Calu3 (cell line): ENCODE measurements at regions of chrX and their contacts with region 1.

Region 1: GRCh38 chrX:115330498-115331168 is 41.1 kb downstream of the LUZP4 start:
- DNase-seq: peak; percentile 39
- H3K4me3 Mint-ChIP-seq: no peak overlapping the region
- H3K27ac Mint-ChIP-seq: no peak overlapping the region
- H3K4me1 Mint-ChIP-seq: no peaks in the 10 kb centered on the region
- H3K27me3 Mint-ChIP-seq: no peaks in the 10 kb centered on the region
- CTCF ChIP-seq: peak; percentile 57

Region 2: DNA sequence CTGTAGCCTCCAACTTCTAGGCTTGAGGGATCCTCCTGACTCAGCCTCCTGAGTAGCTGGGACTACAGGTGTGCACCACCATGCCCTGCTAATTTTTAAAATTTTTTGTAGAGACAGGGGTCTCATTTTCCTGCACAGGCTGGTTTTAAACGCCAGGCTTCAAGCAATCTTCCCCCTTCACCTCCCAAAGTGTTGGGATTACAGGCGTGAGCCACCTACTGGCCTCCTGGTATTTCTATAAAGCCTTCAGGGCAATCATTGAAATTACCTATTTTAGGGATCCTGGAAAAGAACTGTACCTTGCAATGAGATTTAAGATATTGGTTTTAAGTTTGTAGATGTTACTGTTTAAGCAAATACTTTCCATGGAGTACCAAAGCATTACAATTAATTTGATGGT is 216.8 kb after region 1 on chrX:
- CTCF ChIA-PET with region 1: no interaction called
- intact Hi-C with region 1: loop called (anchors 5 kb)
- DNase-seq: peak; percentile 7
- H3K4me3 Mint-ChIP-seq: no peak overlapping the region
- H3K27ac Mint-ChIP-seq: no peak overlapping the region
- H3K4me1 Mint-ChIP-seq: peaks cover 9% of the 10 kb centered on the region
- H3K27me3 Mint-ChIP-seq: no peaks in the 10 kb centered on the region
- CTCF ChIP-seq: no peak

Region 3: DNA sequence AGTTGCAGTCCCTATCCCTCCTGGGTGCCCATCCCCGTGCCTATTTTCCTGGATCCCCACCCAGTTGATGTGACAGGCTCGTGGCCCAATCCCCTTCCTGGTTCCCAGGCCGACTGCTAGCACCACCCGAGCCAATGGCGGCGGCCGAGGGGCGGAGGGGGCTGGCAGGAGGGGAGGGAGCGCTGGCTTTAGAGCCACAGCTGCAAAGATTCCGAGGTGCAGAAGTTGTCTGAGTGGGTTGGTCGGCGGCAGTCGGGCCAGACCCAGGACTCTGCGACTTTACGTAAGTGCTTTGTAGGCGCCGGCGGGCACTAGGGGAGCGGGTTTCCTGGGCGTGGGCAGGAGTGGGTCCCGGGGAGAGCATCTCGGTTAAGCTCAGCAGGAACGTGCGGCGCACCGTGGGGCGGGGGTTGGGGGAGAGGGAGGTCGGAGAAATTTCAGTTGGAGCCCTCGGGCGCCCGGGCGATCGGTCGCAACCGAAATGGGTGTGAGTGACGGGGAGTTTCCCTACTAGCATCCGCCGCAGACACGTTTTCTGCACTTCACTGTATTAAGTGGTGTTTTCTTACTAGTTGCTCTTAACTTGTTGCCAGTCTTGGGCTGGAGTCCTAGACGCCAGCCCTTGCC is 230.5 kb after region 1 on chrX and contains the start of gene PLS3:
- CTCF ChIA-PET with region 1: no interaction called
- intact Hi-C with region 1: loop called (anchors 1 kb)
- DNase-seq: peak; percentile 88
- H3K4me3 Mint-ChIP-seq: peak within 1 kb of the TSS; percentile 86
- H3K27ac Mint-ChIP-seq: peak within 1 kb of the TSS; percentile 92
- H3K4me1 Mint-ChIP-seq: peaks cover 20% of the 10 kb centered on the region
- H3K27me3 Mint-ChIP-seq: no peaks in the 10 kb centered on the region
- CTCF ChIP-seq: no peak
- total RNA-seq, gene PLS3: 169 and 174 TPM in 2 replicates

Region 4: DNA sequence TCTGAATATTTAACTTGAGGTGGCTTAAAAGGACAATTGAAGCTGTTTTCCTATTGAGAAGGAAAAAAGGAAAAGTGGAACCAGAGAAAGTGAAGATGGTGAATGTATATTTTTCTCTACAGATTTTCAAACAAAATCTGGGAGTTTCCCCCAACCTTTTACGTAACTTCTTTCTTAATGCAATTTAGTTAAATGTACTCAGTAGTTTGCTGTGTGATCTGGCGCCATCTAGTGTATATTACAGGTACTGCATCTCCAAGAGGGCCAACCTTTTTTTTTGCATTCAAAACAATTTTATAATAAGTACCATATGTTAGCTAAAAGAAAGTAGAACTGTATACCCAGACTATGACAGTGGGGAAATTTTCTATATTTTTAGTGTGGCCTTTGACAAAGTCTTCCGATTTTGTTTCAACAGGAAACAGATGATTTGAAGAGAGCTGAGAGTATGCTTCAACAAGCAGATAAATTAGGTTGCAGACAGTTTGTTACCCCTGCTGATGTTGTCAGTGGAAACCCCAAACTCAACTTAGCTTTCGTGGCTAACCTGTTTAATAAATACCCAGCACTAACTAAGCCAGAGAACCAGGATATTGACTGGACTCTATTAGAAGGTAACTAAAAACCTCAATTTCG is 312.4 kb after region 1 on chrX:
- CTCF ChIA-PET with region 1: no interaction called
- intact Hi-C with region 1: loop called (anchors 1 kb)
- DNase-seq: peak; percentile 38
- H3K4me3 Mint-ChIP-seq: no peak overlapping the region
- H3K27ac Mint-ChIP-seq: no peak overlapping the region
- H3K4me1 Mint-ChIP-seq: no peaks in the 10 kb centered on the region
- H3K27me3 Mint-ChIP-seq: no peaks in the 10 kb centered on the region
- CTCF ChIP-seq: peak; percentile 64

Region 5: GRCh38 chrX:115679460-115679859 is 348.8 kb after region 1 on chrX:
- CTCF ChIA-PET with region 1: interaction called, 4 read pairs
- intact Hi-C with region 1: loop called (anchors 2 kb)
- DNase-seq: no peak
- H3K4me3 Mint-ChIP-seq: no peak overlapping the region
- H3K27ac Mint-ChIP-seq: no peak overlapping the region
- H3K4me1 Mint-ChIP-seq: no peaks in the 10 kb centered on the region
- H3K27me3 Mint-ChIP-seq: no peaks in the 10 kb centered on the region
- CTCF ChIP-seq: no peak

Region 6: DNA sequence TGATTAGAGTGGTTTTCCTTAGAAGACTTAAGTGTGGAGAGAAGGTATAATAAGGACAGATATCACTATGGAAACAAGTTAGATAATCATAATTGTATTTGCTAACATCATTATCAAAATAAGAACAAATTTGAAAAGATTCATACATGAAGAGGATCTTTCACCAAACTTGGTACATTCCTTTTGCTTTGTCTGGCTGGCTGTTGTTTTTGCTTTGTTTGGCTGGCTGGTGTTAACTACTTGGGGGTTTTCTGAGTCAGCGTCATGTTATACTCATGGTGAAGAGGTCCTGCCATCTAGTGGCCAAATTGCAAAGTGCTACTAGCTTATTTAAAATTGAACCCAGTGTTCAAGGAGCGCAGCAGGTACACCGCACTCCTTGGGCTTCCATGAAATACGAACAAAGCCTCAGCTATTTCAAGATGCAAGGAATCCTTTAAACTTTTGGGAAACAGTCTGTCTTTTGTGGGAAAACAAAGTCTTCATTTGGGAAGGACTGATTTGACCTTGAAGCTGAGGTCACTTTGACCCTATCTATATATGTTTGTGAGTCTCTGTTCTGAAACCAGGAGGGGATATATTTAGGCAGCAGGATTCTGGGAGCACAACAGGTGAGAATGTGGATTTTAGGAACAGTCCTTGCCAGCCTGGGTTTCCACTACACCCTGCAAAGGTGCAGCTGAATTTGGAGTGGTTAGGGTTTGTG is 360.0 kb after region 1 on chrX:
- CTCF ChIA-PET with region 1: no interaction called
- intact Hi-C with region 1: loop called (anchors 2 kb)
- DNase-seq: peak; percentile 45
- H3K4me3 Mint-ChIP-seq: no peak overlapping the region
- H3K27ac Mint-ChIP-seq: no peak overlapping the region
- H3K4me1 Mint-ChIP-seq: no peaks in the 10 kb centered on the region
- H3K27me3 Mint-ChIP-seq: no peaks in the 10 kb centered on the region
- CTCF ChIP-seq: no peak